ENCODE measurements at regions of chr5 and their contacts with region 1.

Region 1: DNA sequence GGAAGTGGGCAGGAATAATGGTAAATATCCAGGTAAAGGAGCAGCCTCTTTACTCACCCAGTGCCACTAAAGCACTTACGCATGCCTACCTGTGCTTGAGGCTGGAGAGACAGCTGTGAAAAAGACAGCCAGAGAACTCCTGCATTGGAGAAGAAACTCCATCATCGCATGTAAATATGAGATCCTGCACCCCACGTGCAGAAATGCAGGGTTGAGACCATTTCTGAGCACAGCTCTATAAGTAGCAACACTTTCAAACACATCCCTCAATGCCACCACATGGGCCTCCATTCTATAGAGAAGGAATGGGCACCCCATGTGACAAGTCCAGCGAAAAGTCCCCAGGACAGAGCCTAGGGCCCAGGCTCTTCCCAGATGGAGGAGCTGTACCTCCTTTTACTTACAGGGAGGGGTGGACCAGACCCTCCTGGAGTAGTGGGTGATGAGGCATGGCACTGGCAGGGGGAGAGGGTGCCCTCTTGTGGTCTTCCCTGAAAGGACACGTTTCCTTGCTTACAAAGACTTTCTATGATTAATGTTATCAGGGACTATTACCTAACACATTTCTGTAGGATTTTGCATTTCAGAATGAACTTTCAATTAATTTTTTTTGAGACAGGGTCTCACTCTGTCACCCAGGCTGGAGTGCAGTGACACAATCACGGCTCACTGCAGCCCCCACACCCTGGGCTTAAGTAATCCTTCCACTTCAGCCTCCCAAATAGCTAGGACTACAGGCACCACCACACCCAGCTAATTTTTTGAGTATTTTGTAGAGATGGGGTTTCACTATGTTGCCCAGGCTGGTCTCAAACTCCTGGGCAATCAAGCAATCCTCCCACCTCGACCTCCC is 55.3 kb upstream of the IL17B start:
- DNase-seq: peak; percentile 62 to 87
- H3K4me3 ChIP-seq: no peak overlapping the region
- H3K27ac ChIP-seq: no peak overlapping the region
- H3K4me1 ChIP-seq: peaks cover 0 to 5% (median 2%) of the 10 kb centered on the region in 4 experiments; a peak in 2 of 7 replicates
- H3K27me3 ChIP-seq: no peaks in the 10 kb centered on the region
- CTCF ChIP-seq: peak; percentile 80 to 90 (median 88)
- EP300 ChIP-seq: no peak
- POLR2A ChIP-seq: no peak
- RAD21 ChIP-seq: peak; percentile 82 to 88

Region 2: DNA sequence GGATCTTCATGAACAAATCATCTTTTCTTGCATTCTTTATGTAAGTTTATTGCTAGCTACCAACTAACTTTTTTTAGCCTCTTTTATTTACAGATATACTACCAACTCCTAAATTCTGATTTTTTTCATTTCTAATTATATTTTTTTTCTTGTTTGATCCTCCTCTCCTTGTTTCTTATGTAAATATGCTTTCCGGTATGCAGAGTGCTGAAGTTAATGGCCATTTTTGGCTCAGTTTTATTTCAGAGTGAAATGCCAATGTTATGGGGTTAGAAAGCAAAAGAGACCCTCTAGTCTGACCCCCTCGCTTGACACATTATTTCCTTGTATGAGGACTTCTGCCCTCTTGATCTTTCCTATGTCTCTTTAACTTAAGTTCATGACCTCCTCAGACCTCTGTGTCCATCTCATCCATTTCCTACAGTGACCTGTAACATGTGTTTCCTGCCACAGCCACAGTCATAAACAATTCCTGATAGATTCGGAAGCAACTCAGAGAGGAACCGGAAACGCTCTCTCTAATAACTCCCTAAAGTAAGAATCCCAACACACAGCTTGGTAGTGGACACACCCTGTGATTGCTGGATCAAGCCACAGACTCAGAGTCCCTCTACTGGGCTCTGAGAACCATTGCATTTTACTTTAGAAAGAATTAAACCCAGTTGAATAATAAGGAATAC is 205.6 kb before region 1 on chr5:
- CTCF ChIA-PET with region 1: no interaction called
- POLR2A ChIA-PET with region 1: no interaction called
- DNase-seq: no peak
- H3K4me3 ChIP-seq: no peak overlapping the region
- H3K27ac ChIP-seq: no peak overlapping the region
- H3K4me1 ChIP-seq: peaks cover 0 to 3% (median 0%) of the 10 kb centered on the region in 4 experiments; a peak in 1 of 7 replicates
- H3K27me3 ChIP-seq: no peaks in the 10 kb centered on the region
- CTCF ChIP-seq: peak; percentile 15 to 67 (median 60)
- EP300 ChIP-seq: no peak
- POLR2A ChIP-seq: no peak
- RAD21 ChIP-seq: peak; percentile 77 to 82

Region 3: GRCh38 chr5:149317281-149318048 is 116.9 kb before region 1 on chr5:
- CTCF ChIA-PET with region 1: interaction called, 12 read pairs
- POLR2A ChIA-PET with region 1: no interaction called
- DNase-seq: no peak
- H3K4me3 ChIP-seq: no peak overlapping the region
- H3K27ac ChIP-seq: no peak overlapping the region; the same call in 1 of the 2 replicates
- H3K4me1 ChIP-seq: peaks cover 0 to 4% (median 1%) of the 10 kb centered on the region in 4 experiments; a peak in 4 of 7 replicates
- H3K27me3 ChIP-seq: no peaks in the 10 kb centered on the region
- CTCF ChIP-seq: peak in 2 of 3 experiments; percentile 63 to 67; a peak in 3 of 4 replicates
- EP300 ChIP-seq: no peak
- POLR2A ChIP-seq: no peak
- RAD21 ChIP-seq: peak; percentile 68 to 75

Region 4: DNA sequence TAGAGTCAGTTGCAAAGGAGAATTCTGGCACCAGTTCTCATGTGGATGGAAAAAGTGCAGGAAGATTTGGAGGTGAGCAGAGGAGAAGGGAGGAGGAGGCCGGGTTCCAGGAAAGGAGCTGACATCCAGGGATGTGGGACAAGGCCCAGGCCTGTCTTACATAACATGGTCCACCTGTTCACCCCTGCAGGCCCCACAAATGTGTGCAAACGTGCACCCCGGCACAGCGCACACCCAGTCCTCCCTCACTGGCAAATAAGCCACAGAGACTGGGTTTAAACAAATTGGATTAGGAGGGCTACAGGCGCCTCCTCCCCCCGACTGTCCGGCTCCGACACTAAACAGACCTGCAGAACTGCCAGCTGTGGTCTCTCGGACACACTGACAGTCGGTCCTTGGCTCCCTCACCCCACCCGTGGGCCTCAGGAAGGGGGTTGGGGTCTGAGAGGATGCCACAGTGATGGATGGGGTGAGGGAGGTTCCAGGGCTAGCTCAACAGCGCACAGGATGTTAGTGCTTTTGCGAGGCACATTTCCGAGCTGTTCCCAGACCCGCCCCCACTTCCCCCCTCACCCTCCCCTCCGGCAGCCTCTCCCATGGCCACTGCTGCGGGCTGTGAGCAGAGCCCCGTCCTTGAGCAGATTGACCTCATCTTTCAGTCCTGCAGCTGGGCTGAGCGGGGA is 11.9 kb before region 1 on chr5:
- CTCF ChIA-PET with region 1: interaction called, 315 read pairs
- POLR2A ChIA-PET with region 1: interaction called, 3 read pairs
- DNase-seq: no peak
- H3K4me3 ChIP-seq: no peak overlapping the region
- H3K27ac ChIP-seq: no peak overlapping the region
- H3K4me1 ChIP-seq: peaks cover 13 to 33% (median 20%) of the 10 kb centered on the region in 4 experiments
- H3K27me3 ChIP-seq: no peaks in the 10 kb centered on the region
- CTCF ChIP-seq: no peak
- EP300 ChIP-seq: peak in 1 of 2 experiments; percentile 22; a peak in 1 of 3 replicates
- POLR2A ChIP-seq: no peak
- RAD21 ChIP-seq: no peak

Region 5: GRCh38 chr5:149551200-149552037 is 117.0 kb after region 1 on chr5 and contains the start of gene CSNK1A1:
- CTCF ChIA-PET with region 1: interaction called, 174 read pairs
- POLR2A ChIA-PET with region 1: no interaction called
- DNase-seq: peak; percentile 97 to 98
- H3K4me3 ChIP-seq: peak within 1 kb of the TSS; percentile 97 to 100 (median 99)
- H3K27ac ChIP-seq: peak within 1 kb of the TSS; percentile 93
- H3K4me1 ChIP-seq: peaks cover 0 to 4% (median 2%) of the 10 kb centered on the region in 4 experiments; a peak in 4 of 7 replicates
- H3K27me3 ChIP-seq: no peaks in the 10 kb centered on the region
- CTCF ChIP-seq: peak; percentile 41 to 62 (median 44); a peak in 3 of 4 replicates
- EP300 ChIP-seq: no peak
- POLR2A ChIP-seq: peak; percentile 48 to 84
- RAD21 ChIP-seq: peak; percentile 57 to 58
- total RNA-seq, gene CSNK1A1: 244 and 254 TPM in 2 replicates

Region 6: DNA sequence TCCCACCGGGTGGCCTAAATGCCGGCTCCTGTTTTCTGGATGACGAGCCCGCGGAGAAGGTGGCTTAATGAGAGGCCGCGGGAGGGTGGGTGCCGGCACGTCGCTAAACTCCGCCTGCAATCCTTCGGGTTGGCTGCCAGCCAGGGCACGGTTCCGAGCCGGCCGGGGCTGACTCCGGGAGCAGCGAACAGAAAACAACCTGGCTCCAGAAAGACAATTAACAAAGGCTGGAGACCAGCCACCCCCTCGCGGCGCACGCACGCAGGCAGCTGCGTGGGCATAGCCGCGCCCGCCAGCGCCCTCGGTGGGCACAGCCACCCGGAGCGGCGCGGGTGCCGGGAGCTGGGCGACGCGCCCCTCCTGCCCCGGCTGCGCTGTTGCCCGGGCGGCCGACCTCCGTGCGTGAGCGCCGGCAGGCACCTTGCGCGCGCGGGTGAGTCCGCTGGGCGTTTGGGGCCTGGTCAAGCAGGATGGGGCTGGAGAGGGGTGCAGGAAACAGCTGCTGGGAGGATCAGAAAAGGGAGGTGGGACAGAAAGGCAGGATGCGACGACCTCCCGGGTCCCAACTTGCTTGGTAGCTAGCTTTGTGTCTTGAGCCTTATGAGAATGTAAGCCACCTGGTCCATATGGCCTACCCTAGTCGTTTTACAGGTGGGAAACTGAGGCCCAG is 146.9 kb after region 1 on chr5 and contains the start of gene ARHGEF37:
- CTCF ChIA-PET with region 1: interaction called, 12 read pairs
- POLR2A ChIA-PET with region 1: interaction called, 3 read pairs
- DNase-seq: peak in 1 of 2 experiments; percentile 73
- H3K4me3 ChIP-seq: peak within 1 kb of the TSS; percentile 44 to 64 (median 50)
- H3K27ac ChIP-seq: no peak within 1 kb of the TSS
- H3K4me1 ChIP-seq: peaks cover 0 to 14% (median 5%) of the 10 kb centered on the region in 4 experiments; a peak in 6 of 7 replicates
- H3K27me3 ChIP-seq: peaks cover 0 to 18% (median 13%) of the 10 kb centered on the region in 4 experiments; a peak in 6 of 7 replicates
- CTCF ChIP-seq: no peak
- EP300 ChIP-seq: no peak
- POLR2A ChIP-seq: no peak
- RAD21 ChIP-seq: no peak
- total RNA-seq, gene ARHGEF37: 0.48 and 1.8 TPM in 2 replicates

Region 7: GRCh38 chr5:149618581-149619251 is 184.3 kb after region 1 on chr5:
- CTCF ChIA-PET with region 1: interaction called, 26 read pairs
- POLR2A ChIA-PET with region 1: no interaction called
- DNase-seq: peak in 1 of 2 experiments; percentile 56
- H3K4me3 ChIP-seq: no peak overlapping the region
- H3K27ac ChIP-seq: no peak overlapping the region
- H3K4me1 ChIP-seq: peaks cover 0 to 3% (median 0%) of the 10 kb centered on the region in 4 experiments; a peak in 1 of 7 replicates
- H3K27me3 ChIP-seq: no peaks in the 10 kb centered on the region
- CTCF ChIP-seq: peak; percentile 50 to 83 (median 72)
- EP300 ChIP-seq: no peak
- POLR2A ChIP-seq: no peak
- RAD21 ChIP-seq: peak; percentile 80 to 90

Measured in H1 (cell line).